PC-9 (cell line): ENCODE measurements at regions of chr1 and their contacts with region 1.

Region 1: DNA sequence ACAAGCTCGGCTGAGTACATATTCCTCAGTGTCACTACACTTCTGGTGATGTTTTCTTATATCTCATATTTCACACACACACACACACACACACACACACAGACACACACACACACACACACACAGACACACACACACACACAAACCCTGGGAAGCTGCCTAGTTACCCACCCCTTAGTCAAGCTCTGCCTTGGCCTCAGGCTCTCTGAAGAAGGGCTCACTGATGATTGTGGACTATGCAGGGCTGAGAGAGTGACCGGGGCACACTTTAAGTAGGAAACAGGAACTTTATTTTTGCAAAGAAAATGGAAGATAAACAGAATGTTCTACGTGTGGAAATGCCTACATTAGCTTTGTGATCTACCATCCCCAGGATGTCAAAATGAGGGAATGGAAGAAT is 19.2 kb upstream of the LCE2D start:
- DNase-seq: no peak
- H3K4me3 ChIP-seq: no peak overlapping the region
- H3K27ac ChIP-seq: no peak overlapping the region
- H3K4me1 ChIP-seq: no peaks in the 10 kb centered on the region
- H3K27me3 ChIP-seq: peaks cover 22% of the 10 kb centered on the region
- CTCF ChIP-seq: no peak

Region 2: GRCh38 chr1:151372061-151372934 is 1271.6 kb before region 1 on chr1 and contains the start of gene SELENBP1:
- CTCF ChIA-PET with region 1: interaction called, 17 read pairs
- POLR2A ChIA-PET with region 1: no interaction called
- intact Hi-C with region 1: no loop called
- DNase-seq: peak in 1 of 2 experiments; percentile 62
- H3K4me3 ChIP-seq: no peak within 1 kb of the TSS
- H3K27ac ChIP-seq: no peak within 1 kb of the TSS
- H3K4me1 ChIP-seq: no peaks in the 10 kb centered on the region; the same call in 1 of the 2 replicates
- H3K27me3 ChIP-seq: no peaks in the 10 kb centered on the region
- CTCF ChIP-seq: no peak
- total RNA-seq, gene SELENBP1: 11.3 and 18.4 TPM in 2 replicates

Region 3: GRCh38 chr1:152577168-152577567 is 66.8 kb before region 1 on chr1:
- CTCF ChIA-PET with region 1: no interaction called
- POLR2A ChIA-PET with region 1: no interaction called
- intact Hi-C with region 1: no loop called
- DNase-seq: no peak
- H3K4me3 ChIP-seq: no peak overlapping the region
- H3K27ac ChIP-seq: no peak overlapping the region
- H3K4me1 ChIP-seq: no peaks in the 10 kb centered on the region
- H3K27me3 ChIP-seq: peaks cover 10% of the 10 kb centered on the region; the same call in 1 of the 2 replicates
- CTCF ChIP-seq: no peak